ENCODE measurements at regions of chr2 and their contacts with region 1.

Region 1: DNA sequence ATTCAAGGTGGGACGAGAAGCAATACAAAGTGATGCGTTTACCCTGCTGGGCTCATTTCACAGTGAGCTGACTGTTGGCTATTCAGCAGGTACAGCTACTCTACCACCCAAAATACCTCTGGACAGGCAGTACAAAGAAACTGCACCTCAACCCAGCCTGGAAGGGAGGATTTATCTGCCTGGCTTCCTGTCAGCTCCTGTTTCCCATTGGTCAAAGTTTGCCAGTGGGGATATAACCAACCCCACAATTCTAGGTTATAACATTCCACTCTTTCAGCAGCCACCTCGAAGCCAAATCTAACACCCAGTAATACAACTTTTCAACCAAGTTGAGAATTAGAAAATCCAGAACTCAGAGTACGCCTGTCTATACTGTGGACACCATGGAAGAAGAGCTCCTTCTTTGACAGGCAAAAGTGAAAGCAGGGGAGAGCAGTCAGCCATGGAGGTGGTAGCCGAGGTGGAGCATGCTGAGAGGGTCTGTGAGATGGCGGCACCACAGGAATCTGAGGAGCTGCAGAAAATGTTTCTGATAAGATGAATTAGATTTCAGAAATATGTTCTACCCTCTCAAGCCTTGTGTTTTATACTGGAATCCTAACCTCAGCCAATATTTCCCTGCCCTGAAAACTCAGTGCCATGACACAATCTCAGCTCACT is 10.8 kb downstream of the DUSP19 start:
- DNase-seq: no peak
- ATAC-seq: no peak
- H3K4me3 ChIP-seq: no peak overlapping the region
- H3K27ac ChIP-seq: no peak overlapping the region
- H3K4me1 ChIP-seq: peaks cover 0 to 9% (median 0%) of the 10 kb centered on the region in 9 donors
- H3K27me3 ChIP-seq: no peaks in the 10 kb centered on the region
- CTCF ChIP-seq: no peak

Region 2: DNA sequence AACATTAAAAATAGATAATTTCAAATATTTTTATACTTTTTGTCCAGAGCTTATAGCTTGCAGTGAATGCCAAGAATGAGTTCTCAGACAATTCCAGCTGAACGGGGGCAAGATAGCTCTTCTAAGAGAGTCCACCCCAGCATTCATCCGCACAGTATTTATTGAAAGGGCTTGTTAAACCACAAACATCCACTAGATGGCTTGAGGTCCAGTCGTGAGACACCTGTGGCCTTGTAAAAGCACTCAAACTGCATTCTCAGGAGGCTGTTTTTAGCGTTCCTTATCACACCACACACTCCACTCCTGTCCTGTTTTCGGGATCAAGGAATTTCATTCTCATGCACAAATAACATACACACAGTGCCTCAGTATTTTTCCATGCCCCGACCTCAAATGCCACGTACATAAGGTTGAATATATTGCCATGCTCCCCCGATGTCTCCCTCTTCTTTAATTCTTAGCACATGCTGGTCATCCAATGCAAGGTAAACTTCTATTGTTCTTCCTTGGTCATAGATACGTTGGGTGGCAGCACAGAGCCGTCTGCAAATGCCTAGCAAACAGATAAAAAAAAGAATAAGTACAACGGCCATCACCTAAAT is 325.9 kb before region 1 on chr2:
- intact Hi-C with region 1: loop called in 1 of 10 experiments (anchors 10 kb)
- DNase-seq: peak in 1 of 2 donors; percentile 15
- ATAC-seq: peak in 5 of 8 donors; percentile 55 to 68 (median 57)
- H3K4me3 ChIP-seq: no peak overlapping the region
- H3K27ac ChIP-seq: peak overlapping the region in 2 of 10 donors; percentile 33 to 34
- H3K4me1 ChIP-seq: peaks cover 0 to 36% (median 12%) of the 10 kb centered on the region in 9 donors
- H3K27me3 ChIP-seq: no peaks in the 10 kb centered on the region
- CTCF ChIP-seq: peak; percentile 15 to 65 (median 58)

Region 3: DNA sequence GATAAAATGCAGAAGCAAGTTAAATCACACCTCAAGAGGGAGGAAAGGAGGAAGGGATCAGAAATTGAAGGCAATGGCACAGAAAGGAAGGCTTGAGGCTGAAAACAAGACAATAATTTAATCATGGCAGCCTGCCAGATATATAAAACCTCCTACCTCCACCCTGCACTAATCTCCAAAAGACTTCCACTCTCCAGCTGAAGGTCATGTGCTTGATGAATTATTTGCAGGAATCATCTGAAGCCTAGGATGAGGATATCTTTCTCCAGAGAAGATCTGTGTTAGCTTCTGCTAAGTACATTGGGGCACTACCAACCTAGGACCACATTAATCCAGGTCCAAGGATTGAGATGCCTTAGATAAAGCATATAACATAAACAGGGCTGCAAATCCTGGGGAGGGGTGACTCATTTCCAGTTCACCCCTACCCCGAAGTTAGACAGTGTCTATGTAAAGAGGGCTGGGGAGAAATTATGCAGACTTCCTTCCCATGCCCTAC is 142.4 kb before region 1 on chr2:
- intact Hi-C with region 1: no loop called
- DNase-seq: no peak
- ATAC-seq: peak in 2 of 8 donors; percentile 20 to 41
- H3K4me3 ChIP-seq: no peak overlapping the region
- H3K27ac ChIP-seq: no peak overlapping the region
- H3K4me1 ChIP-seq: peaks cover 0 to 34% (median 14%) of the 10 kb centered on the region in 9 donors
- H3K27me3 ChIP-seq: no peaks in the 10 kb centered on the region
- CTCF ChIP-seq: no peak

Region 4: DNA sequence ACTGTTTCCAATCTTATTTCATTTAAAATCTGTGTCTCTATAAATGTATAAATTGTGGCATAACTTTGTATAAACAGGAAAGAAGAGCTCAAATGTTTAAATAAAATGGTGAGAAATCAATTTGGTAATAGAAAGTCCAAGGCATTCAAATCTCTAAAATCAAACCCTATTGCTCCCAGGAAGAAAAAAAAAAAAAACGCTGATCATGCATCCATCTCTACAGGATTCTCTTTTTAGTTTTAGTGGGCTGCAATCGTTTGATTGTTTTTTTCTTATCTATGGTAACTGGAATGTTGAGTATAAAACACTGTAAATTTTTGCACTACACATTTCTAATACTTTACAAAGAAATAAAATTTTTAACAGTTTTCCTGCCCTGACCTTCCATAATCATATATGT is 126.7 kb before region 1 on chr2:
- intact Hi-C with region 1: no loop called
- DNase-seq: no peak
- ATAC-seq: no peak
- H3K4me3 ChIP-seq: no peak overlapping the region
- H3K27ac ChIP-seq: no peak overlapping the region
- H3K4me1 ChIP-seq: peaks cover 0 to 6% (median under 1%) of the 10 kb centered on the region in 9 donors
- H3K27me3 ChIP-seq: no peaks in the 10 kb centered on the region
- CTCF ChIP-seq: no peak

Region 5: DNA sequence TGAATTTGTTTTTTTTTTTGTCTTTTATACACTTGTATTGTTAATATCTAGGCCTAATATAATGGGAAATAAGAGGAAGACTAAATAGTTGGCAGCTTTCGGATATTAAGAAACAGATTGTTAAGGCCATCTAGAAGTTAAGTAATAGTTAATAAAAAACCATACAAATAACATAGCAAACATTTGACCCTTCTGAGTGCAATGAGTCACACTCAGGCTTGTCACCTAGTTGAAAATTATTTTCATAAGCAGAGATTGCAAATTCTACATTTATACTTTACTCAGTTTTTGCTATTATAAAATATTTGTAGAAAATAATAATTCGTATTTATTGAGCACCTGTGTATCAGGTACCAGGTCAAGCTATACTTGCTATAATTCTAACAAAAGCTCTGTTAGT is 37.3 kb after region 1 on chr2:
- intact Hi-C with region 1: no loop called
- DNase-seq: no peak
- ATAC-seq: no peak
- H3K4me3 ChIP-seq: no peak overlapping the region
- H3K27ac ChIP-seq: no peak overlapping the region
- H3K4me1 ChIP-seq: peaks cover 0 to 23% (median 14%) of the 10 kb centered on the region in 9 donors
- H3K27me3 ChIP-seq: no peaks in the 10 kb centered on the region
- CTCF ChIP-seq: no peak